HCT116 (cell line): ENCODE measurements at regions of chr6 and their contacts with region 1.

Region 1: DNA sequence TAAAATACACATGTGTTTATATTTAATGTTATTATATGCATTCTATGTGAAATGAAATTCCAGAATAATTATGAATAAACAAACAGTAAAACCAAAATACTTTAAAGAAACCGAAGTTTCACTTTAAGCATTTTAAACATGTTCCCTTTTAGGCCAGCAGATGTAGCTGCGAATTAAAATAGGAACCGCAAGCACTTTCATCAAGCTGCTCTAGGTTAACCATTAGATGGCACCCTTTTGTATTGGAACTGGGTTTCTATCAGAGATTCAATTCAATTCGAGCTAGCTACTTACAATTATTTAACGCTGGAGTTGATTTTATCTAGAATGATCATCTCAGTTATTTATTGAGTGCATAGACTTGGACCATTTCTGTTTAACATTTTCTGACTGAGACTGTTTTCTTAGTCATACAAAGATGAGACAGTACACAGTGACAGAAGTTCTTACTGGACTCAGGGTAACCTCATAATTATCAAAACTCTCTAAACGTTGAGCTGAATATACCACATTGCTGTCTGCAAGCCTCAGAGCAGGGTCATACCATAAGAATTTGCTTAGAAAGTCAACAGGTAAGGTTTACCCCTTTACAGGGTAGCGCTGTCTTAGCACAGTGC is 8.5 kb downstream of the TMEM242 start:
- DNase-seq: peak; percentile 58
- ATAC-seq: peak; percentile 80
- H3K4me3 ChIP-seq: no peak overlapping the region
- H3K27ac ChIP-seq: no peak overlapping the region
- H3K4me1 ChIP-seq: peaks cover 5 to 14% of the 10 kb centered on the region in 2 experiments
- H3K27me3 ChIP-seq: no peaks in the 10 kb centered on the region
- CTCF ChIP-seq: peak; percentile 71 to 100 (median 92)
- POLR2A ChIP-seq: no peak
- RAD21 ChIP-seq: peak; percentile 98

Region 2: GRCh38 chr6:157335829-157336228 is 21.0 kb after region 1 on chr6:
- CTCF ChIA-PET with region 1: interaction called, 13 read pairs
- POLR2A ChIA-PET with region 1: no interaction called
- RAD21 ChIA-PET with region 1: no interaction called
- intact Hi-C with region 1: loop called (anchors 1 kb)
- DNase-seq: no peak
- ATAC-seq: peak; percentile 32
- H3K4me3 ChIP-seq: no peak overlapping the region
- H3K27ac ChIP-seq: no peak overlapping the region
- H3K4me1 ChIP-seq: 0 out of 4 replicates have a peak, but pooled peaks cover 0 to 5% of the 10 kb centered on the region in 2 experiments
- H3K27me3 ChIP-seq: no peaks in the 10 kb centered on the region
- CTCF ChIP-seq: no peak
- POLR2A ChIP-seq: no peak
- RAD21 ChIP-seq: no peak

Region 3: GRCh38 chr6:157614026-157614568 is 299.3 kb after region 1 on chr6:
- CTCF ChIA-PET with region 1: interaction called, 22 read pairs
- POLR2A ChIA-PET with region 1: interaction called, 4 read pairs
- RAD21 ChIA-PET with region 1: no interaction called
- intact Hi-C with region 1: loop called (anchors 5 kb)
- DNase-seq: no peak
- ATAC-seq: no peak
- H3K4me3 ChIP-seq: no peak overlapping the region
- H3K27ac ChIP-seq: peak overlapping the region; percentile 57
- H3K4me1 ChIP-seq: peaks cover 18 to 29% of the 10 kb centered on the region in 2 experiments
- H3K27me3 ChIP-seq: no peaks in the 10 kb centered on the region
- CTCF ChIP-seq: 0 out of 6 replicates have a peak, but pooled peaks of 1 of the 3 experiments have one; percentile 13
- POLR2A ChIP-seq: no peak
- RAD21 ChIP-seq: peak; percentile 43; the same call in 1 of the 2 replicates

Region 4: DNA sequence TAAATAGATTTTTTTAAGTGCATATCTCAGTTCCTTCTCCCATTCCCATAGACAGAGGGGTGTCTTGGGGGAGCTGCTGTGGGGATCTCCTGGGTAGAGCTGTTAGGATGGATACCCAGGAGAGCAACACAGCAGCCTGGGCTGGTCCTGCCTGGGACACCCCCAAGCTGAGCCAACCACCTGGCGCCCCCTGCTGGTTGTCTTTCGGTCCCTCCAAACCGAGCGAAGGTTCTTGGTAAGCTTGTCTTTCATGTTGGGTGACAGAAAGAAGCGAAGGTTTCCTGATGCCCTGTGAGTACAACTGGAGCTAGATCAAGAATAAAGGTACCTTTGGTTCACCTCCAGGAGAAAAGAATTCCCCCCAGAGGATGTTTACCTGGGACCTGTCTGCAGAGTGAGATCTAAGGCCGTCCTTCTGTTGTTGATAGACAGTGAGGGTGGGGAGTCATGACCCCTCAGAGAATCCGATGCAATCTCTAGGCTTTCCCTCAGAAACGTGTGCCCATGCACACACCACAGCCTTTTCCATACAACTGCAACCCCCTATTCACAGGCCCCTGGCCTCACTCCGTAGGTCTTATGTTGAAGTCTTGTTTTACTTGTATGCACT is 559.0 kb after region 1 on chr6:
- CTCF ChIA-PET with region 1: interaction called, 6 read pairs
- POLR2A ChIA-PET with region 1: no interaction called
- RAD21 ChIA-PET with region 1: no interaction called
- intact Hi-C with region 1: loop called (anchors 5 kb)
- DNase-seq: peak; percentile 50
- ATAC-seq: peak; percentile 98
- H3K4me3 ChIP-seq: no peak overlapping the region
- H3K27ac ChIP-seq: no peak overlapping the region
- H3K4me1 ChIP-seq: no peaks in the 10 kb centered on the region
- H3K27me3 ChIP-seq: no peaks in the 10 kb centered on the region
- CTCF ChIP-seq: peak; percentile 88 to 92 (median 89); a peak in 5 of 6 replicates
- POLR2A ChIP-seq: no peak
- RAD21 ChIP-seq: peak; percentile 95

Region 5: DNA sequence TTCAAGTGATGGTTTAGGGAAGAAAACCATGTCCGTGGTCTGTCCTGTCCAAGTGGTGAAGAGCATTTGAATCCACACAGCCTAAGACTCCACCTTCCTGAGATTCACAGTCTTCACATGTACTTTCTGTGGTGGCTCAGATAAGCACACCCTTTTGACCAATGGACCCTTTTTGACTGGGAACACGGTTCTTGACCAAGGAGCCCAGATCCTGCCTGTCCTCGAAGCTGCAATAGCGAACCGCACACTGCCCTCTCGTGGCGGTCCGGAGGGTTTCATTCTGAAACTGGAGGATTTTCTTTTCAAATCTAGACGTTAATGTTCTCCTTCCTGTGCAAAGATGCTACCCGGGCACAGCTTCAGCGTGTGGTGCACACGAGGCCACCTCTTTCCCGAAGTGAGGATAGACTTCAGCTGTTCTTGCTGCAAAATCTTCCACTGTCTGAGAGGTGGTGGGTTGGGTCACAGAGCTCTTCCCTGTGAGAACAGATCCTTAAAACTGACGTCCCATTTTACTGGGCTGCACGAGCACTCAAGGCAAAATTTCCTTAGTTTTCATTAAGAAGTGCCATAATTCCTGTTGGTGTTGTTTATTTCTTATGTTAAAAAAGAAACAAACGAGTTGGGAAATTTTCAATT is 757.4 kb after region 1 on chr6:
- CTCF ChIA-PET with region 1: no interaction called
- POLR2A ChIA-PET with region 1: no interaction called
- RAD21 ChIA-PET with region 1: no interaction called
- intact Hi-C with region 1: loop called (anchors 10 kb)
- DNase-seq: no peak
- ATAC-seq: peak; percentile 44
- H3K4me3 ChIP-seq: no peak overlapping the region
- H3K27ac ChIP-seq: no peak overlapping the region
- H3K4me1 ChIP-seq: peaks cover 26 to 43% of the 10 kb centered on the region in 2 experiments
- H3K27me3 ChIP-seq: no peaks in the 10 kb centered on the region
- CTCF ChIP-seq: peak; percentile 75 to 87 (median 87)
- POLR2A ChIP-seq: no peak
- RAD21 ChIP-seq: peak; percentile 98